Activated T-helper 1 cell treated with anti-CD3 and anti-CD28 coated beads, Interleukin-12 subunit alpha, Interleukin-12 subunit beta, Interleukin-2, Interleukin-4 antibody, amounts not matched to agents 30 ng/mL and 10 ng/mL and 1 ng/mL, durations not matched to agents 14 hours and 24 hours and 36 hours (primary cell): ENCODE measurements at regions of chr2 and their contacts with region 1.

Region 1: GRCh38 chr2:166610180-166610912 is 116.3 kb upstream of the SCN7A start:
- DNase-seq: no peak
- H3K4me3 Mint-ChIP-seq: no peak overlapping the region
- H3K27ac Mint-ChIP-seq: no peak overlapping the region
- H3K4me1 Mint-ChIP-seq: peaks cover 4% of the 10 kb centered on the region
- H3K27me3 Mint-ChIP-seq: peaks cover 4% of the 10 kb centered on the region

Region 2: DNA sequence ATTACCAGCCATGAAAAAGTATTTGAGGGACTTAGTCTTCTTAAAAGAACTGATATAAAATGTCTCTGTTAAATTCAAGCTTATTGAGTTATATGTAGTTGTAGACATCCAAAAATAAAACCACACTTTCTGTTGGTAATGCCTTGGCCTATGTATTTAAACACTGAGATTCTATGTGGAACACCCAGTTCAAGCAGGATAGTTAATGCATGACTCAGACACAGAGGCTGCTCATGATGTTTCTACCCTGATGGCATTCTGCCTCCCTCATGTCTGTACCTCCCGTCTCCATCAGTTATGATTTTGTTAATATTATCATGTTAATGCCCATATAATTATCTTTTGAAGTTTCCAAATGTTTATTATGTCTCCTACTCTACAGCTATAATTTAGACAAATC is 442.5 kb after region 1 on chr2:
- intact Hi-C with region 1: no loop called
- DNase-seq: no peak
- H3K4me3 Mint-ChIP-seq: no peak overlapping the region
- H3K27ac Mint-ChIP-seq: no peak overlapping the region
- H3K4me1 Mint-ChIP-seq: no peaks in the 10 kb centered on the region
- H3K27me3 Mint-ChIP-seq: no peaks in the 10 kb centered on the region

Region 3: DNA sequence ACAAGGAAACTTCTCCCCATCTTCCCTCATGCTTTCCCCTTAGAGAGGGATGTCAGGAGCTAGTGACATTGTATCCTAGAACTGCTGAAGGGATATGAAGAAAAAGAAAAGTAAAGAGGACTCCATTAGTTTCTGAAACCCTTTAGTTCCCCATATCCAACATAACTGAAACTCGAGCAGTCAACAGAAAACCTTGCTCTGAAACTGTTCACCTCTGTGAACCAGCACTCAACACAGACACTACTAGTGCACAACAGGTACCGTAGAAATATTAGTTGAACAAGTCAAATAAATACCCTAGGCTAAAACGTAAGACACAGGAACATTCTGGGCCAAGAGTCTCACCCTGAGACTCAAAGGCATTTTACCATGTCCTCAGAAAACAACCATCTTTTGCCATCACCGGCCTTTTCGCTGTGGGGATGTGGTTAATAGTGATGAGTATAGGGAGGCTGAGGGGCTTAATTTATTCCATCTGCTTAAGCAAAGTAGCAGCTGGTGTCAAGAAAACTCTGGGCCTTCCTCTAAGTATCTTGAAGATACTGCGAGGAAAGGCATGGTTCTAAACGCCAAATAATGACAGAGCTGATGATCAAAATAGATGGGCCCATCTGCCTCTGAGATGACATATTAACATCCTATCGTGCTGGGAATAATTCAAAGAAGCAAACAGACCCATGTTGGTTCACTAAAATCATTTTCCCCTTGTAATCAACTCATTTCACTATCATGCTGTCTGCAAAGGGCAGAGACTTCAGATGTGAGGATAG is 1480.2 kb after region 1 on chr2:
- intact Hi-C with region 1: loop called (anchors 5 kb)
- DNase-seq: no peak
- H3K4me3 Mint-ChIP-seq: no peak overlapping the region
- H3K27ac Mint-ChIP-seq: no peak overlapping the region
- H3K4me1 Mint-ChIP-seq: peaks cover 20% of the 10 kb centered on the region
- H3K27me3 Mint-ChIP-seq: no peaks in the 10 kb centered on the region